Spleen (tissue), 13 donors: ENCODE measurements at regions of chr17 and their contacts with region 1.

Region 1: GRCh38 chr17:49843774-49844350 is 4.0 kb downstream of the TAC4 start:
- DNase-seq: no peak
- H3K4me3 ChIP-seq: no peak overlapping the region
- H3K27ac ChIP-seq: no peak overlapping the region
- H3K4me1 ChIP-seq: peaks cover 0 to 40% (median 18%) of the 10 kb centered on the region in 6 donors
- H3K27me3 ChIP-seq: no peaks in the 10 kb centered on the region
- CTCF ChIP-seq: peak in 3 of 11 experiments; percentile 20 to 33 (median 22)
- POLR2A ChIP-seq: no peak

Region 2: GRCh38 chr17:49775543-49776260 is 68.2 kb before region 1 on chr17:
- intact Hi-C with region 1: no loop called
- DNase-seq: peak; percentile 81
- H3K4me3 ChIP-seq: no peak overlapping the region
- H3K27ac ChIP-seq: peak overlapping the region; percentile 51 to 85 (median 81)
- H3K4me1 ChIP-seq: peaks cover 14 to 60% (median 41%) of the 10 kb centered on the region in 6 donors
- H3K27me3 ChIP-seq: no peaks in the 10 kb centered on the region
- CTCF ChIP-seq: no peak
- POLR2A ChIP-seq: no peak

Region 3: GRCh38 chr17:49798182-49798581 is 45.7 kb before region 1 on chr17:
- intact Hi-C with region 1: loop called (anchors 10 kb)
- DNase-seq: no peak
- H3K4me3 ChIP-seq: no peak overlapping the region
- H3K27ac ChIP-seq: no peak overlapping the region
- H3K4me1 ChIP-seq: peaks cover 9 to 82% (median 35%) of the 10 kb centered on the region in 6 donors
- H3K27me3 ChIP-seq: no peaks in the 10 kb centered on the region
- CTCF ChIP-seq: no peak
- POLR2A ChIP-seq: no peak